ENCODE measurements at regions of chr3 and their contacts with region 1.

Region 1: DNA sequence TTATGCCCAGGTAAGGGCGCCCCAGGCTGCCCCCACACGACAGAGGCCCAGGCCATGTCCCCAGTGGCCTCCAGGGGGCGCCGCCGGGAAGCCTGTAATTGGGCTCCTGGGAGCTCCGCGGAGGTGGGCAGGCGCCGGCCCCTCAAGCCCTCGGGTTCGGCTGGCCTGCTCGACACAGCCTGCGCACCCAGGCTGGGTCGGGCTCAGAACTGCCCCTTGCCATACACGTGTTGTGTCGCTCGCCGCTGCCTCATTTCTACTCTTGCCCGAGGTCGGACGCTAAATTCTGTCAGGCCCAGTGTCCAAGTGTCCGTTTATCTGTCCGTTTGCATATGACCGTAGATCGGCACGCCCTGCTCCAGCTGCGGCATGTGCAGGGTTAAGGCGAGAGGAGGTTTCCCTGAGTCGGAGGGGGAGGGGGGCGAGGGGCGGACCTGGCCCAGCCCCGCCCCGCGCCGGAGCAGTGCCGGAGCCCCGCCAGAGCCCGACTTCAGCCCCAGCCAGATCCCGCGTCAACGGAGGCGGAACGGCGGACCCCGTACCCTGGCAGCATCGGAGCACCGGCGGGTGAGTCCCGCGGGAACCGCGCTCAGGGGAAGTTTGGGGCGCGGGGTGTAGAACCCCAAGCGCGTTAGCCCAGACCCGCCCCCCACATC is at the start of gene KLHDC8B:
- DNase-seq: peak; percentile 97
- H3K4me3 ChIP-seq: peak within 1 kb of the TSS; percentile 81 to 90
- H3K27ac ChIP-seq: peak within 1 kb of the TSS; percentile 70 to 99
- H3K4me1 ChIP-seq: peaks cover 14 to 57% of the 10 kb centered on the region in 2 experiments
- H3K27me3 ChIP-seq: no peaks in the 10 kb centered on the region
- CTCF ChIP-seq: peak; percentile 92
- EP300 ChIP-seq: no peak; a peak in 1 of 4 replicates
- RAD21 ChIP-seq: peak; percentile 71
- polyA plus RNA-seq, gene KLHDC8B: 35.3 and 40.6 TPM in 2 replicates

Region 2: GRCh38 chr3:49133226-49133951 is 37.9 kb before region 1 on chr3:
- CTCF ChIA-PET with region 1: interaction called, 16 read pairs
- POLR2A ChIA-PET with region 1: interaction called, 11 read pairs
- DNase-seq: peak; percentile 89
- H3K4me3 ChIP-seq: peak overlapping the region; percentile 67 to 81
- H3K27ac ChIP-seq: peak overlapping the region; percentile 83 to 91
- H3K4me1 ChIP-seq: peaks cover 0 to 18% of the 10 kb centered on the region in 2 experiments; a peak in 1 of 4 replicates
- H3K27me3 ChIP-seq: no peaks in the 10 kb centered on the region
- CTCF ChIP-seq: no peak
- EP300 ChIP-seq: peak in 1 of 2 experiments; percentile 30; a peak in 2 of 4 replicates
- RAD21 ChIP-seq: no peak

Region 3: GRCh38 chr3:49296781-49297411 is 125.6 kb after region 1 on chr3:
- CTCF ChIA-PET with region 1: interaction called, 16 read pairs
- POLR2A ChIA-PET with region 1: no interaction called
- DNase-seq: no peak
- H3K4me3 ChIP-seq: no peak overlapping the region
- H3K27ac ChIP-seq: no peak overlapping the region; a peak in 1 of 4 replicates
- H3K4me1 ChIP-seq: no peaks in the 10 kb centered on the region
- H3K27me3 ChIP-seq: no peaks in the 10 kb centered on the region
- CTCF ChIP-seq: no peak
- EP300 ChIP-seq: no peak
- RAD21 ChIP-seq: no peak

Region 4: DNA sequence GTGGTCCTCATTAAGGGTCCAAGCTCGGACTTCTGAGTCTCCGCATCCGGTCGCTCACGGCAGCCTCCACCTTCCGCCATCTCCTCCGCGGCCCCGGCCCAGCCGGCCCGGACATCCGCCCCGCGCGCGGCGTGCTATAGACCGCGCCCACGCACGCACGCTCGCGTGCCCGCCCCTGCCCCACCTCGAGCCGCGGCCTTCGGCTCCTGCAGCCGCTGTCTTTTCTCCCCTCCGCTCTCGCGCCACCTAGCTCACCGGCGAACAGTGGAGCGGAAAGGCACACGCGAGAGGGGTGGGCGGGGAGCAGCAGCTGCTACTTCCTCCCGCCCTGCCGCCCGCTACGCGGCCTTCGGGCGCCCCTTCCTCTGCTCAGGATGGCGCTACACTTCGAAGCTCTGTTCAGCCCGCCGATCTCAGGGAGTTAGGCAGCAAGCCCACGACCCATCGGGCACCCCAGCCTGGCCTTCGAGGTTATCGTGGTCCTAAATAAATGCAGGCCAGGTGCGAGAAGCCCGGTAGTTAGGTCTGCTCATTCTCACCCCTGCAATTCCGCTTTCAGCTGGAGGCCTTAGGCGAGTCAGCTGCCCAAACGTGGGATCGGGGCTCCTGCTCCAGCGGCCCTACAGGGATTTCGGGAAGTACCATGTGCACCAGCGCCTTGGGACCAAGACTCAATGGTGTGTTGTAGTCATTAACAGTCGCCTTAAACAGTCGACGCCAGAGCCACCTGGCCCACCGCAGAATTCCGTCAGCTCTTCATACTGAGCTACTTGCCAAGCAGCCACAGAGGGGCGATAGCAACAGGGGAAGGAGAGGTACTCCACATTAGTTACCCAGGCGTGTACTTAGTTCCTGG is 168.9 kb after region 1 on chr3 and contains the start of gene USP4:
- CTCF ChIA-PET with region 1: interaction called, 20 read pairs
- POLR2A ChIA-PET with region 1: interaction called, 4 read pairs
- DNase-seq: peak; percentile 93
- H3K4me3 ChIP-seq: peak within 1 kb of the TSS; percentile 67 to 69
- H3K27ac ChIP-seq: peak within 1 kb of the TSS; percentile 77 to 93
- H3K4me1 ChIP-seq: peaks cover 5 to 11% of the 10 kb centered on the region in 2 experiments; a peak in 2 of 4 replicates
- H3K27me3 ChIP-seq: no peaks in the 10 kb centered on the region
- CTCF ChIP-seq: peak; percentile 30
- EP300 ChIP-seq: peak in 1 of 2 experiments; percentile 19; a peak in 1 of 4 replicates
- RAD21 ChIP-seq: peak; percentile 56
- polyA plus RNA-seq, gene USP4: 33.2 and 45.6 TPM in 2 replicates

Region 5: DNA sequence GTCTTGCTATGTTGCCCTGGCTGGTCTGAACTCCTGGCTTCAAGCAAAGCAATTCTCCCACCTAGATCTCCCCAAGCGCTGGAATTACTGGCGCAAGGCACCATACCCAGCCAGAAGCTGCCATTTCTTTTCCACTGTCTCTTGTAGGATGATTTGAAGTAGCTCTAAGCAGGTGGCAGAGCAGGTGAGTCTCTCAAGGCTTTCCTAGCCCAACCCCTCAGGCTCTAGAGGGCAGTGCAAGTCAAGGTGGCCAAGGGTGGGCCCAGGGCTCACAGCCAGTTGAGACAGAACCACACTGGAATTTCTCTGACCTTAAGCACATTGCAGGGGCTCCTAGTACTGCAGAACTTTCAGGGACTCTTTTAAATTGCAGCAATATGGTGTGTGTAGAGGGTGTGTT is 283.2 kb after region 1 on chr3:
- CTCF ChIA-PET with region 1: interaction called, 21 read pairs
- POLR2A ChIA-PET with region 1: interaction called, 4 read pairs
- DNase-seq: no peak
- H3K4me3 ChIP-seq: no peak overlapping the region
- H3K27ac ChIP-seq: no peak overlapping the region
- H3K4me1 ChIP-seq: peaks cover 0 to 7% of the 10 kb centered on the region in 2 experiments; a peak in 1 of 4 replicates
- H3K27me3 ChIP-seq: no peaks in the 10 kb centered on the region
- CTCF ChIP-seq: no peak
- EP300 ChIP-seq: no peak
- RAD21 ChIP-seq: peak; percentile 37